ENCODE measurements at regions of chr3 and their contacts with region 1.

Region 1: DNA sequence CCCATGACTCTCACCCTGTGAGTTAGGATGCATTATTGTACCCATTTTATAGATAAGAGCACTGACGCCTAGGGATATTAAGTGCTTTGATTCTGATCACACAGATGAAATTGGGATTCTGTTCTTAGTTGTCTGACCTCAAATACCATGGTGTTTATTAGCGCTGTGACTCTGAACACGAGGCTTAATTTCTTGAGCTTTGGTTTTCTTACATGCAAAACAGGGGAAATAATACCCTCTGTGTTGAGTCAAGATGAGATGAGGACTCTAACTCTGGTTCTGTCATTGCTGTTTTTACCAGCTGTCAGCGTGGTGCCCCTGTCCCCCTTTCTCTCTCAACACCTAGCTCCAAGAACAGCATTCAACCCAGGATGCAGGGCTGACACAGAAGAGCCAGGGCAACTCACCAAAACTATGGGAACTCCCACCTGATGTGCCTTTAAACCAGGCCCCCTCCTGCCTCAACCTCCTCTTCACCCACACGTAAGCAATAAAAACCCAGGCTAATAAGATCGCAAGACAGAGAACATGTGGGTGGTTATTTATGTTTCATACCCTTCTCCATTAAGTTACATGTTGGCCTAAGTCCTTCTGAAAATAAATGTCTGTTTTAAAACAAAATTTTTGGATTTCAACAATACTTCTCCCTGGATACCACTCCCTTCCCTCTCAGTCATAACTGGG is 100.1 kb upstream of the SPATA12 start:
- DNase-seq: no peak
- H3K4me3 ChIP-seq: no peak overlapping the region
- H3K27ac ChIP-seq: no peak overlapping the region
- H3K4me1 ChIP-seq: peaks cover 0 to 4% (median 0%) of the 10 kb centered on the region in 4 experiments
- H3K27me3 ChIP-seq: no peaks in the 10 kb centered on the region

Region 2: GRCh38 chr3:56980798-56981390 is 20.5 kb after region 1 on chr3:
- CTCF ChIA-PET with region 1: interaction called, 12 read pairs
- POLR2A ChIA-PET with region 1: no interaction called
- DNase-seq: peak; percentile 74 to 96 (median 94)
- H3K4me3 ChIP-seq: no peak overlapping the region
- H3K27ac ChIP-seq: no peak overlapping the region
- H3K4me1 ChIP-seq: peaks cover 0 to 28% (median 14%) of the 10 kb centered on the region in 4 experiments
- H3K27me3 ChIP-seq: no peaks in the 10 kb centered on the region